Lower lobe of right lung (tissue), 2 donors: ENCODE measurements at regions of chr21 and their contacts with region 1.

Region 1: GRCh38 chr21:26070822-26071425 is 99.6 kb downstream of the APP start:
- DNase-seq: peak; percentile 64
- ATAC-seq: peak; percentile 90 to 92
- H3K4me3 ChIP-seq: peak overlapping the region; percentile 26
- H3K27ac ChIP-seq: peak overlapping the region; percentile 19
- H3K4me1 ChIP-seq: peaks cover 16% of the 10 kb centered on the region
- H3K27me3 ChIP-seq: no peaks in the 10 kb centered on the region
- CTCF ChIP-seq: no peak

Region 2: GRCh38 chr21:25925064-25925800 is 145.7 kb before region 1 on chr21:
- intact Hi-C with region 1: no loop called
- DNase-seq: no peak
- ATAC-seq: no peak
- H3K4me3 ChIP-seq: no peak overlapping the region
- H3K27ac ChIP-seq: peak overlapping the region; percentile 3
- H3K4me1 ChIP-seq: peaks cover 20% of the 10 kb centered on the region
- H3K27me3 ChIP-seq: no peaks in the 10 kb centered on the region
- CTCF ChIP-seq: no peak

Region 3: DNA sequence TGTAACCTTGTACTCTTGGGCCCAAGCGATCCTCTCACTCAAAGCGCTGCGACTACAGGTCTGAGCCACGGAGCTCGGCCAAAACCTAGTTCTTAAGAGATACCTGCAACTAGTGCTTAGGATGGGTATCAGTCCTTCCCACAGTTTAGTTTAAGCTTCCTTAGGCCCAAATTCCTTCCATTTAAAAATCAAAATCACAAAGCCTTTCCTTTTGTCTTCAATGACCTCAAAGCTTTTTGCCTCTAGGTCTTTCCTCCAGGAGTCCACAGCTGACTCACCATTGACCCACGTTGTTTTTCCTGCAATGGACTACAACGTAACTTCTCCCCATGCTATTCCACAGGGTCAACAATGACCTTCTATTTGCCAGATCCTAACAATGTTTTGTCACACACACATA is 35.6 kb after region 1 on chr21:
- intact Hi-C with region 1: loop called (anchors 5 kb)
- DNase-seq: no peak
- ATAC-seq: no peak
- H3K4me3 ChIP-seq: no peak overlapping the region
- H3K27ac ChIP-seq: no peak overlapping the region
- H3K4me1 ChIP-seq: no peaks in the 10 kb centered on the region
- H3K27me3 ChIP-seq: no peaks in the 10 kb centered on the region
- CTCF ChIP-seq: no peak